Motor neuron (in vitro differentiated cells): ENCODE measurements at regions of chrX and their contacts with region 1.

Region 1: GRCh38 chrX:3143043-3143799 is 102.0 kb downstream of the ARSF start:
- ATAC-seq: no peak
- H3K4me3 ChIP-seq: no peak overlapping the region
- H3K27ac ChIP-seq: no peak overlapping the region
- H3K4me1 ChIP-seq: no peaks in the 10 kb centered on the region

Region 2: GRCh38 chrX:3204606-3205005 is 61.4 kb after region 1 on chrX:
- in situ Hi-C with region 1: loop called in 1 of 9 experiments (anchors 10 kb)
- ATAC-seq: no peak
- H3K4me3 ChIP-seq: no peak overlapping the region
- H3K27ac ChIP-seq: no peak overlapping the region
- H3K4me1 ChIP-seq: no peaks in the 10 kb centered on the region